GM12878 (cell line): ENCODE measurements at regions of chr19 and their contacts with region 1.

Region 1: GRCh38 chr19:37931881-37932655 is 25.1 kb downstream of the SIPA1L3 start:
- DNase-seq: no peak
- ATAC-seq: peak; percentile 70
- H3K4me3 ChIP-seq: peak overlapping the region; percentile 69
- H3K27ac ChIP-seq: peak overlapping the region; percentile 87
- H3K4me1 ChIP-seq: peaks cover 46% of the 10 kb centered on the region
- H3K27me3 ChIP-seq: no peaks in the 10 kb centered on the region
- CTCF ChIP-seq: 0 out of 6 replicates have a peak, but pooled peaks of 1 of the 3 experiments have one; percentile 10
- EP300 ChIP-seq: no peak
- POLR2A ChIP-seq: peak; percentile 55
- RAD21 ChIP-seq: no peak

Region 2: GRCh38 chr19:37914908-37915307 is 17.2 kb before region 1 on chr19:
- CTCF ChIA-PET with region 1: interaction called, 14 read pairs
- POLR2A ChIA-PET with region 1: interaction called, 46 read pairs
- RAD21 ChIA-PET with region 1: interaction called, 22 read pairs
- SMC1A ChIA-PET with region 1: interaction called, 57 read pairs
- in situ Hi-C with region 1: no loop called
- intact Hi-C with region 1: no loop called
- DNase-seq: peak; percentile 77
- ATAC-seq: peak; percentile 70
- H3K4me3 ChIP-seq: peak overlapping the region; percentile 77
- H3K27ac ChIP-seq: peak overlapping the region; percentile 87
- H3K4me1 ChIP-seq: peaks cover 42% of the 10 kb centered on the region
- H3K27me3 ChIP-seq: no peaks in the 10 kb centered on the region
- CTCF ChIP-seq: no peak
- EP300 ChIP-seq: peak in 1 of 2 experiments; percentile 67; a peak in 2 of 4 replicates
- POLR2A ChIP-seq: peak; percentile 44; the same call in 1 of the 2 replicates
- RAD21 ChIP-seq: no peak

Region 3: GRCh38 chr19:37920591-37921450 is 11.2 kb before region 1 on chr19:
- CTCF ChIA-PET with region 1: interaction called, 11 read pairs
- POLR2A ChIA-PET with region 1: interaction called, 46 read pairs
- RAD21 ChIA-PET with region 1: interaction called, 22 read pairs
- SMC1A ChIA-PET with region 1: interaction called, 46 read pairs
- in situ Hi-C with region 1: no loop called
- intact Hi-C with region 1: no loop called
- DNase-seq: no peak
- ATAC-seq: peak; percentile 37
- H3K4me3 ChIP-seq: peak overlapping the region; percentile 31; the same call in 1 of the 2 replicates
- H3K27ac ChIP-seq: peak overlapping the region; percentile 92
- H3K4me1 ChIP-seq: peaks cover 50% of the 10 kb centered on the region
- H3K27me3 ChIP-seq: no peaks in the 10 kb centered on the region
- CTCF ChIP-seq: no peak
- EP300 ChIP-seq: no peak
- POLR2A ChIP-seq: no peak
- RAD21 ChIP-seq: no peak

Region 4: DNA sequence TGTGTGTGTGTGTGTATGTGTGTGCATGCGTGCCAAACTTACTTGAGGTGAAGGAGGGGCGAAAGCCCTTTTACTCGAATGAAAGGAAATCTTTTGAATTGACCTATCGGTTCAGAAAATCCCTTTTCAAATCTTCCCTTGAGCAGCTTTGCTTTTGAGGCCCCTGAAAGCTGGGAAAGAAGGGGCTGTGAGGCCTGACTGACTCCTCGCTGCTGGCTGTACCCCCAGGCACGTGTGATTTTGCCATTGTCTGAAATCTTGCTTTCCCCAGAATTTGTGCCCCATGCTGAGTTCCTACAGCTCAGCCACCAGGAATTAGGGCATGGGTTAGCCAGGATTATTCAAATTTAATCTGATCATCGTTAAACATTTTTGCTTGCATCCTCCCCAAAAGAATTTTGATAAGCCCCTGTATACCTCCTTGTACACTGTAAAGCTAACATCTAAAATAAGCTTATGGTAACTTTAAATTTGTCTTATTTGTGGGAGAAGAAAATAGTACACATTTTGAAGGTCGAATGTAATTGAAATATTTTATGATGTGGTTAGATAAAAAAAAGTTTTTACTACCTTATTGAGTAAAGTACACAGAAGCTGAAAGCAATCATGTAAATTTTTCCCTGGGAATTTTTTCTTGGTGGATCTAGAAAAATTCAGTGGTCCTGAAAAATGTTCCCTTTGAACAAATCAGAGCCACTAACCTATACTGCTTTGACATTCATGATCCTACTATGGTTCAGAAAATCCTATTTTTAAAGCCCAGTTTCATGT is 21.6 kb after region 1 on chr19:
- CTCF ChIA-PET with region 1: interaction called, 12 read pairs
- POLR2A ChIA-PET with region 1: interaction called, 21 read pairs
- RAD21 ChIA-PET with region 1: interaction called, 6 read pairs
- SMC1A ChIA-PET with region 1: interaction called, 33 read pairs
- in situ Hi-C with region 1: no loop called
- intact Hi-C with region 1: no loop called
- DNase-seq: no peak
- ATAC-seq: no peak
- H3K4me3 ChIP-seq: no peak overlapping the region
- H3K27ac ChIP-seq: peak overlapping the region; percentile 57
- H3K4me1 ChIP-seq: peaks cover 45% of the 10 kb centered on the region
- H3K27me3 ChIP-seq: no peaks in the 10 kb centered on the region
- CTCF ChIP-seq: no peak
- EP300 ChIP-seq: no peak
- POLR2A ChIP-seq: no peak
- RAD21 ChIP-seq: no peak

Region 5: GRCh38 chr19:37963190-37963936 is 31.3 kb after region 1 on chr19:
- CTCF ChIA-PET with region 1: interaction called, 12 read pairs
- POLR2A ChIA-PET with region 1: interaction called, 21 read pairs
- RAD21 ChIA-PET with region 1: interaction called, 16 read pairs
- SMC1A ChIA-PET with region 1: interaction called, 33 read pairs
- in situ Hi-C with region 1: no loop called
- intact Hi-C with region 1: no loop called
- DNase-seq: no peak
- ATAC-seq: peak; percentile 59
- H3K4me3 ChIP-seq: no peak overlapping the region
- H3K27ac ChIP-seq: peak overlapping the region; percentile 45
- H3K4me1 ChIP-seq: peaks cover 45% of the 10 kb centered on the region
- H3K27me3 ChIP-seq: no peaks in the 10 kb centered on the region
- CTCF ChIP-seq: peak in 1 of 3 experiments; percentile 9; a peak in 1 of 6 replicates
- EP300 ChIP-seq: no peak
- POLR2A ChIP-seq: no peak
- RAD21 ChIP-seq: no peak

Region 6: GRCh38 chr19:37979547-37980082 is 47.5 kb after region 1 on chr19:
- CTCF ChIA-PET with region 1: interaction called, 4 read pairs
- POLR2A ChIA-PET with region 1: interaction called, 21 read pairs
- RAD21 ChIA-PET with region 1: interaction called, 27 read pairs
- SMC1A ChIA-PET with region 1: interaction called, 30 read pairs
- in situ Hi-C with region 1: no loop called
- intact Hi-C with region 1: loop called (anchors 5 kb)
- DNase-seq: peak; percentile 69
- ATAC-seq: peak; percentile 46
- H3K4me3 ChIP-seq: peak overlapping the region; percentile 38; the same call in 1 of the 2 replicates
- H3K27ac ChIP-seq: peak overlapping the region; percentile 95
- H3K4me1 ChIP-seq: peaks cover 58% of the 10 kb centered on the region
- H3K27me3 ChIP-seq: no peaks in the 10 kb centered on the region
- CTCF ChIP-seq: no peak
- EP300 ChIP-seq: no peak
- POLR2A ChIP-seq: peak; percentile 57; the same call in 1 of the 2 replicates
- RAD21 ChIP-seq: no peak

Region 7: GRCh38 chr19:37987356-37988332 is 55.6 kb after region 1 on chr19:
- CTCF ChIA-PET with region 1: interaction called, 27 read pairs
- POLR2A ChIA-PET with region 1: interaction called, 8 read pairs
- RAD21 ChIA-PET with region 1: interaction called, 13 read pairs
- SMC1A ChIA-PET with region 1: interaction called, 15 read pairs
- in situ Hi-C with region 1: no loop called
- intact Hi-C with region 1: no loop called
- DNase-seq: no peak
- ATAC-seq: peak; percentile 77
- H3K4me3 ChIP-seq: no peak overlapping the region
- H3K27ac ChIP-seq: peak overlapping the region; percentile 86
- H3K4me1 ChIP-seq: peaks cover 34% of the 10 kb centered on the region
- H3K27me3 ChIP-seq: no peaks in the 10 kb centered on the region
- CTCF ChIP-seq: peak; percentile 26 to 58 (median 39); a peak in 4 of 6 replicates
- EP300 ChIP-seq: no peak
- POLR2A ChIP-seq: no peak
- RAD21 ChIP-seq: peak; percentile 54

Region 8: GRCh38 chr19:38361633-38362075 is 429.6 kb after region 1 on chr19:
- CTCF ChIA-PET with region 1: no interaction called
- POLR2A ChIA-PET with region 1: no interaction called
- RAD21 ChIA-PET with region 1: no interaction called
- SMC1A ChIA-PET with region 1: no interaction called
- in situ Hi-C with region 1: no loop called
- intact Hi-C with region 1: no loop called
- DNase-seq: no peak
- ATAC-seq: peak; percentile 82
- H3K4me3 ChIP-seq: peak overlapping the region; percentile 71; the same call in 1 of the 2 replicates
- H3K27ac ChIP-seq: no peak overlapping the region
- H3K4me1 ChIP-seq: no peaks in the 10 kb centered on the region; the same call in 1 of the 2 replicates
- H3K27me3 ChIP-seq: peaks cover 0 to 2% of the 10 kb centered on the region in 2 experiments; a peak in 3 of 4 replicates
- CTCF ChIP-seq: peak in 2 of 3 experiments; percentile 9 to 15; a peak in 1 of 6 replicates
- EP300 ChIP-seq: no peak
- POLR2A ChIP-seq: no peak
- RAD21 ChIP-seq: no peak